ENCODE measurements at regions of chr16 and their contacts with region 1.

Region 1: GRCh38 chr16:1782352-1783091 is at the starts of genes NUBP2 and SPSB3:
- DNase-seq: peak; percentile 93 to 100 (median 97)
- ATAC-seq: peak; percentile 84
- H3K4me3 ChIP-seq: peak within 1 kb of the TSS; percentile 88
- H3K4me3 Mint-ChIP-seq: peak within 1 kb of the TSS; percentile 95
- H3K27ac ChIP-seq: peak within 1 kb of the TSS; percentile 69 to 74
- H3K27ac Mint-ChIP-seq: peak within 1 kb of the TSS; percentile 96
- H3K4me1 ChIP-seq: peaks cover 61% of the 10 kb centered on the region
- H3K4me1 Mint-ChIP-seq: peaks cover 26% of the 10 kb centered on the region
- H3K27me3 ChIP-seq: no peaks in the 10 kb centered on the region
- H3K27me3 Mint-ChIP-seq: no peaks in the 10 kb centered on the region
- CTCF ChIP-seq: no peak
- total RNA-seq, gene NUBP2: 36.4 to 38.1 TPM
- total RNA-seq, gene SPSB3: 86.3 to 87.6 TPM

Region 2: GRCh38 chr16:401468-402348 is 1380.8 kb before region 1 on chr16 and contains the start of gene DECR2:
- CTCF ChIA-PET with region 1: no interaction called
- POLR2A ChIA-PET with region 1: no interaction called
- intact Hi-C with region 1: loop called in 1 of 2 experiments (anchors 10 kb)
- DNase-seq: peak; percentile 94 to 100 (median 99)
- ATAC-seq: peak; percentile 84
- H3K4me3 ChIP-seq: peak within 1 kb of the TSS; percentile 92
- H3K4me3 Mint-ChIP-seq: peak within 1 kb of the TSS; percentile 98
- H3K27ac ChIP-seq: peak within 1 kb of the TSS; percentile 67 to 81
- H3K27ac Mint-ChIP-seq: peak within 1 kb of the TSS; percentile 97
- H3K4me1 ChIP-seq: peaks cover 21% of the 10 kb centered on the region
- H3K4me1 Mint-ChIP-seq: peaks cover 18% of the 10 kb centered on the region
- H3K27me3 ChIP-seq: no peaks in the 10 kb centered on the region
- H3K27me3 Mint-ChIP-seq: no peaks in the 10 kb centered on the region
- CTCF ChIP-seq: peak; percentile 68
- total RNA-seq, gene DECR2: 5.7 to 7.0 TPM

Region 3: GRCh38 chr16:1428511-1428910 is 354.0 kb before region 1 on chr16:
- CTCF ChIA-PET with region 1: no interaction called
- POLR2A ChIA-PET with region 1: no interaction called
- intact Hi-C with region 1: no loop called
- DNase-seq: peak in 11 of 14 experiments; percentile 15 to 65 (median 33)
- ATAC-seq: peak; percentile 71
- H3K4me3 ChIP-seq: no peak overlapping the region
- H3K4me3 Mint-ChIP-seq: no peak overlapping the region
- H3K27ac ChIP-seq: no peak overlapping the region
- H3K27ac Mint-ChIP-seq: no peak overlapping the region
- H3K4me1 ChIP-seq: peaks cover 14% of the 10 kb centered on the region
- H3K4me1 Mint-ChIP-seq: no peaks in the 10 kb centered on the region
- H3K27me3 ChIP-seq: peaks cover 0 to 4% of the 10 kb centered on the region in 2 experiments
- H3K27me3 Mint-ChIP-seq: no peaks in the 10 kb centered on the region
- CTCF ChIP-seq: peak; percentile 25

Region 4: DNA sequence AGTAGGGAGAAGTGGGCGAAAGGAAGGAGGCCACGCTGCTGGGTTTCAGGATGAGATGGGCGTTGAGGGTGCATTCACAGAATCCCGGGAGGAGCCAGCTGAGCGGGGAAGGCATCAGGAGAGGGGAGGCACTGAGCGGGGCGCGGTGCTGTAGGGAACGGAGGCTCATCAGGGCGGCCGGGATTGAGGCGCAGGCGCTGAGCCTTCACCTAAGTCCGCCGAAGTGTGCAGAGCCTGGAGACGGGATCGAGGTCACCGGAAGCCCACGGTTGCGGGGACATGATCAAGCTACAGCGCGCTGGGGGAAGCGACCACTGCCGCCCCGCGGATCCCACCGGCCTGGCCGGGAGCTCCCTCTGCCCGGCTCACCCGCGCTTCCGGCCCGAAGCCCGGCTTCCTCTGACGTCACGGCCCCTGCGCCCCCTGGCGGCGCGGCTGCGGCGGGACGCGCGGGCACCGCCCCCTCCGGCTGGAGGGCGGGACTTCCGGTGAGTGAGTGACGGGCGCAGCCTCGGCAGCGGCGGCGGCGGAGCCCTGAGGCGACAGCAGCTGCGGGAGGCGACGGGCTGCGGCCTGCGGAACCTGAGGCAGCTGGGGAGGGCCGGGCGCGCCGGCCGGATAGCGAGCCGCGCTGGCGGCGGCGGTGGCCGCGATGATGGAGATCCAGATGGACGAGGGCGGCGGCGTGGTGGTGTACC is 76.7 kb before region 1 on chr16 and contains the start of gene MAPK8IP3:
- CTCF ChIA-PET with region 1: interaction called, 9 read pairs
- POLR2A ChIA-PET with region 1: interaction called, 38 read pairs
- intact Hi-C with region 1: no loop called
- DNase-seq: peak; percentile 84 to 99 (median 94)
- ATAC-seq: peak; percentile 75
- H3K4me3 ChIP-seq: peak within 1 kb of the TSS; percentile 98
- H3K4me3 Mint-ChIP-seq: peak within 1 kb of the TSS; percentile 96
- H3K27ac ChIP-seq: peak within 1 kb of the TSS; percentile 77 to 79
- H3K27ac Mint-ChIP-seq: peak within 1 kb of the TSS; percentile 97
- H3K4me1 ChIP-seq: peaks cover 35% of the 10 kb centered on the region
- H3K4me1 Mint-ChIP-seq: peaks cover 38% of the 10 kb centered on the region
- H3K27me3 ChIP-seq: no peaks in the 10 kb centered on the region
- H3K27me3 Mint-ChIP-seq: no peaks in the 10 kb centered on the region
- CTCF ChIP-seq: peak; percentile 70
- total RNA-seq, gene MAPK8IP3: 290 to 297 TPM

Region 5: DNA sequence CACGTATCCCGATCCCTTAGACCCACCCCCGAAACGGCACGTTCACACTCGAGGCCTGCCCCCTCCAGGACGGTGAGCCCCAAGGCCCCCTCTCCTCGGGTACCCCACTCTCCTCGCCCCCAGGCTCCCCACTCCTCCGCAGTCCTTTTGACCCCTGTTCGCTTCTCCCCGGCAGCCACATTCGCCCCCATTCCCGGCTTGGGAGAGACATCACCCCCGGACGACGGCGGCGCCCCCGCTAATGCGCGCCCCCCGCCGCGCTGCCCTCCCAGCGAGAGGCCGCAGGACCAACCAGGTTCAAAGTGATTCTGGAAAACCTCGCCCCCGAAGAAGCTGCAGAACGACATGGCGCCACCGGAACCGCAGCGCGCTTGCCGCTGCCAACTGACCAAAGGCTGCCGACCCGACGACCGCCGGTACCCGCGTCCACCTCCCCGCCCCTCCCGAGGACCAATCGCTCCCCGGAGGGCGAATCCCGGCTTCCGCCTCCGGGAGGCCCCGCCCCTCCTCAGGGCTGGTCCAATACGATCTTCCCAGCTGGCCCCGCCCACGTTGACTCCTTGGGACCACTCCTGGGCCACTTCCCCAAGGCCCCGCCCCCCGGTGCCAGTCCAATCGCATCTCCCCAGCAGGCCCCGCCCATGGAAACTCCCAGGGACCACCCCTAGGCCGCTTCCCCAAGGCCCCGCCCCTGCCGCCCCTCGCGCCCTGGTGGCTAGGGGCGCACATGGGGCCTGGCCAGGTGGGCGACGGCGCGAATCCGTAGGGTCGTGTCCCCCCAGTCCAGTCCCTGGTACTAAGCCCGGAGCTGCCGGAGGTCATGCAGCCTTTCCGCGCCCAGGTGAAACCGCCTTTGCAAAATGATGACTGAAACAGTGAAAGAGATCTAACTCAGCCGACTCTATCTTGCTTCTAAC is 160.5 kb after region 1 on chr16 and contains the start of gene MSRB1:
- CTCF ChIA-PET with region 1: no interaction called
- POLR2A ChIA-PET with region 1: no interaction called
- intact Hi-C with region 1: loop called in 1 of 2 experiments (anchors 5 kb)
- DNase-seq: peak; percentile 97 to 100 (median 99)
- ATAC-seq: peak; percentile 99
- H3K4me3 ChIP-seq: peak within 1 kb of the TSS; percentile 92
- H3K4me3 Mint-ChIP-seq: peak within 1 kb of the TSS; percentile 93
- H3K27ac ChIP-seq: peak within 1 kb of the TSS; percentile 40 to 43
- H3K27ac Mint-ChIP-seq: peak within 1 kb of the TSS; percentile 47
- H3K4me1 ChIP-seq: peaks cover 28% of the 10 kb centered on the region
- H3K4me1 Mint-ChIP-seq: peaks cover 18% of the 10 kb centered on the region
- H3K27me3 ChIP-seq: no peaks in the 10 kb centered on the region
- H3K27me3 Mint-ChIP-seq: no peaks in the 10 kb centered on the region
- CTCF ChIP-seq: no peak
- total RNA-seq, gene MSRB1: 2.3 to 2.4 TPM

Region 6: DNA sequence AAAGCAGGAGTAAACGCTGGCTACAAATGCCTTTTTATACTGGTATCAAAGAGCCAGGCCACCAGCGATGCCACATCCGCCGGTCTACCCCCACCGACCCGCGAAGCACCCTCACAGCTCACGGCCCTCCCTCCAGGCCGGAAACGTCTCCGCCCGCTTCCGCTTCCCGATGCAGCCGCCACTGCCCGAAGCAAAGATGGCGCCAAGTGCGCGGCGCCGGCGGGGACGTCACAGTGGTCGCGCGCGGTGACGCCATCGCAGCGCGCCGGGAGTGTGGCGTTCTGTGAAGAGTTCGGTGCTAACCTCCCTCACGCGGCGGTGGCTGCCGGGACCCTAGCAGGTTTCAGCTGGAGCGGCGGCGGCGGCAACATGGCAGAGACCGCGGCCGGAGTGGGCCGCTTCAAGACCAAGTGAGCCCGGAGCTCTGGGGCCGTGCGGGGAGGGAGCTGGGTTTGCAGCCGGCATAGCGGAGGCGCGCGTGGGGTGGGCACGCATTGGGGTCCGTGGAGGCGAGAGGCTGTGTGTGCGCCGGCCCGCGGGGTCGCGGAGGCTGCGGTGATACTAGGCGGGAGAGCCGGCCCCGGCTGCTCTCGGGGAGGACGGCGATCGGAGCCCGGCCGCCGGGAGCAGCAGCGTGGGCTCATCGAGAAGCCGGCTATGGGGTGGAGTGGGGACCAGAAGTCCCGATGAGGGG is 189.4 kb after region 1 on chr16 and contains the start of gene TBL3:
- CTCF ChIA-PET with region 1: no interaction called
- POLR2A ChIA-PET with region 1: interaction called, 10 read pairs
- intact Hi-C with region 1: no loop called
- DNase-seq: peak; percentile 92 to 98 (median 96)
- ATAC-seq: peak; percentile 97
- H3K4me3 ChIP-seq: peak within 1 kb of the TSS; percentile 73
- H3K4me3 Mint-ChIP-seq: peak within 1 kb of the TSS; percentile 97
- H3K27ac ChIP-seq: peak within 1 kb of the TSS; percentile 87 to 92
- H3K27ac Mint-ChIP-seq: peak within 1 kb of the TSS; percentile 97
- H3K4me1 ChIP-seq: peaks cover 36% of the 10 kb centered on the region
- H3K4me1 Mint-ChIP-seq: peaks cover 20% of the 10 kb centered on the region
- H3K27me3 ChIP-seq: no peaks in the 10 kb centered on the region
- H3K27me3 Mint-ChIP-seq: no peaks in the 10 kb centered on the region
- CTCF ChIP-seq: no peak
- total RNA-seq, gene TBL3: 12.7 to 15.5 TPM

Measured in CD4-positive, alpha-beta T cell (primary cell).